ENCODE measurements at regions of chr6 and their contacts with region 1.

Region 1: DNA sequence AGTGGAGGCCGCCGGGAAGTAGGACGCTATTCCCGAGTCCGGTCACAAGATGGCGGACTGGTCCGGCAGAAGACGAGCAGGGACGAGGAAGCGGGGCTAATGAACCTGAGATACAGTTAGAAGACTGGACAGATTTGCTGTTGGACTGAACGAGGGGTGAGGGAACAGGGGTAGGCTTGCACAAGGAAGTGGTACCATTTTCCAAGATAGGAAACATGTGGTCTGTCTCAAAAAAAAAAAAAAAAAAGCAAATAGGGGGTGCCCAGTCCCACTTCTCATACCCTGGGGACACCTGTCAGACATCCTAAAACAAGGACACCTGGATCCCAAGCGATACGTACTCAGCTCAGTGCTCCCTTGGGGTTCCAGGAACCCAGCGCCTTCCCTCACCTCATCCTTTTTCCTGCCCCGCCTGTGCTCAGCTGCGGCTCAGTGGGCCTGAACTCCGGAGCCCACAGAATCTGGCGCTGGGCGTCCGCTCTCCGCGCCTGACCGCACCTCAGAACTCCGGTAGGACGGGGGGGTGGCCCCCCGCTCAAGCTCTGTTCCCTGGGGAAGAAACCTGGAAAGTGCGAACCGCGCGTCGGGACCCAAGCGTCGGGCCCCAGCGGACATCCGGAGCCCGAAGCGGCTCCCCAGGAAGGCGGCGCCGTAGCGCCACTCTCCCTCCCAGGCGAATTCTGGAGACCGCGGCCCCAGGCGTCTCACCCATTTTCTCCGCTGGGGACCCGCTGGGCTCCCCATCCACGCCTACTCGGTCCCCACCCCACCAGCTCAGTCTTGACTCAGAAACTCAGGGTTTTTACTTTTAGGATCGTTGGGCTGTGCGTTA is at the start of gene LY6G5C:
- DNase-seq: peak; percentile 83
- CTCF ChIP-seq: peak; percentile 77

Region 2: DNA sequence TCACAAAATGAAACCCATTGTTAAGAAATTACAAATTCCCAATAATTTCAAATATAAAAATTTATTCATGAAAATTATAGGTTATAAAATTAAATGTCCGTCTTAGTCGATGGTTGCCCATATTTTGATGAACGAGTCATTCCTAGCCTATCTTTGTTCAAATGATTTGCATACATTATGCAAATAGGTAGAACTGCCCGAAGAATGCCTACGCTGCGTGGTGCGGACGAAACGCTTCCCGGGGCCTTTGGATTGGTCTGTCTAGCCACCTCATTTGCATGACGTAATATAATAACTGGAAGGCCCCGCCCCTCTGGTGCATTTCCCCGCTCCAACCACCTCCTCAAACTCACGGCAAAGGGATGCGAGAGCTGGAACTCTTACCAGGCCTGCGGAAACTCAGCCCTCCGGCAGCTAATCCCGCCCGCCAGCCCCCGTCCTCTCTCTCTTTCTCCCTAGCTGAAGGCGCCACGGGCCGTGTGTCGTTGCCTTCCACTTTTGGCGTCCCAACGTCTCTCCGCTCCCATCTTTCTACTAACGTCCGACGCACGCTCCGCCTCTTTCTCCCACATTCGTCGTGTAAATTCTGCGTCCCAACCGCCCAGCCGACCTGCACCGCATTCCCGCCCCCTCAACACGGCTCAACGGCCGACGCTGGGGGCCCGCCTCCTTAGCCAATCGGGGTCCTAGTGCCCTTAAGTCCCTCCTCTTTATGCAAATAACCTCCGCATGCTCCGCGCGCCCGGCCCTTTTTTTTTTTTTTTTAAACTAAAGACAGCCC is 61.1 kb before region 1 on chr6:
- CTCF ChIA-PET with region 1: no interaction called
- POLR2A ChIA-PET with region 1: no interaction called
- DNase-seq: peak; percentile 86
- CTCF ChIP-seq: no peak

Region 3: GRCh38 chr6:31665501-31666336 is 15.3 kb before region 1 on chr6 and contains the start of gene CSNK2B:
- CTCF ChIA-PET with region 1: interaction called, 14 read pairs
- POLR2A ChIA-PET with region 1: interaction called, 3 read pairs
- DNase-seq: peak; percentile 97
- CTCF ChIP-seq: no peak